ENCODE measurements at regions of chr19 and their contacts with region 1.

Region 1: GRCh38 chr19:34253699-34254551 is 429 bp upstream of the GARRE1 start:
- DNase-seq: peak in 18 of 35 experiments; percentile 5 to 91 (median 80)
- ATAC-seq: peak; percentile 16 to 48 (median 34)
- H3K4me3 ChIP-seq: peak overlapping the region; percentile 78 to 94
- H3K4me3 Mint-ChIP-seq: peak overlapping the region; percentile 86 to 99 (median 95)
- H3K27ac ChIP-seq: peak overlapping the region; percentile 90
- H3K27ac Mint-ChIP-seq: peak overlapping the region; percentile 95 to 98
- H3K4me1 ChIP-seq: peaks cover 14 to 20% of the 10 kb centered on the region in 2 experiments
- H3K4me1 Mint-ChIP-seq: peaks cover 32 to 41% (median 39%) of the 10 kb centered on the region in 3 donors
- H3K27me3 ChIP-seq: no peaks in the 10 kb centered on the region
- H3K27me3 Mint-ChIP-seq: no peaks in the 10 kb centered on the region

Region 2: GRCh38 chr19:33350538-33351309 is 903.2 kb before region 1 on chr19:
- CTCF ChIA-PET with region 1: no interaction called
- POLR2A ChIA-PET with region 1: no interaction called
- DNase-seq: no peak
- ATAC-seq: no peak
- H3K4me3 ChIP-seq: no peak overlapping the region
- H3K4me3 Mint-ChIP-seq: no peak overlapping the region
- H3K27ac ChIP-seq: no peak overlapping the region
- H3K27ac Mint-ChIP-seq: no peak overlapping the region
- H3K4me1 ChIP-seq: no peaks in the 10 kb centered on the region
- H3K4me1 Mint-ChIP-seq: no peaks in the 10 kb centered on the region
- H3K27me3 ChIP-seq: peaks cover 0 to 33% of the 10 kb centered on the region in 2 experiments
- H3K27me3 Mint-ChIP-seq: peaks cover 12 to 31% of the 10 kb centered on the region in 2 donors

Region 3: GRCh38 chr19:34109601-34110000 is 144.3 kb before region 1 on chr19:
- CTCF ChIA-PET with region 1: no interaction called
- POLR2A ChIA-PET with region 1: no interaction called
- DNase-seq: no peak
- ATAC-seq: no peak
- H3K4me3 ChIP-seq: no peak overlapping the region
- H3K4me3 Mint-ChIP-seq: no peak overlapping the region
- H3K27ac ChIP-seq: no peak overlapping the region
- H3K27ac Mint-ChIP-seq: no peak overlapping the region
- H3K4me1 ChIP-seq: no peaks in the 10 kb centered on the region
- H3K4me1 Mint-ChIP-seq: no peaks in the 10 kb centered on the region
- H3K27me3 ChIP-seq: peaks cover 2 to 24% of the 10 kb centered on the region in 2 experiments
- H3K27me3 Mint-ChIP-seq: peaks cover 6 to 17% of the 10 kb centered on the region in 2 donors

Region 4: DNA sequence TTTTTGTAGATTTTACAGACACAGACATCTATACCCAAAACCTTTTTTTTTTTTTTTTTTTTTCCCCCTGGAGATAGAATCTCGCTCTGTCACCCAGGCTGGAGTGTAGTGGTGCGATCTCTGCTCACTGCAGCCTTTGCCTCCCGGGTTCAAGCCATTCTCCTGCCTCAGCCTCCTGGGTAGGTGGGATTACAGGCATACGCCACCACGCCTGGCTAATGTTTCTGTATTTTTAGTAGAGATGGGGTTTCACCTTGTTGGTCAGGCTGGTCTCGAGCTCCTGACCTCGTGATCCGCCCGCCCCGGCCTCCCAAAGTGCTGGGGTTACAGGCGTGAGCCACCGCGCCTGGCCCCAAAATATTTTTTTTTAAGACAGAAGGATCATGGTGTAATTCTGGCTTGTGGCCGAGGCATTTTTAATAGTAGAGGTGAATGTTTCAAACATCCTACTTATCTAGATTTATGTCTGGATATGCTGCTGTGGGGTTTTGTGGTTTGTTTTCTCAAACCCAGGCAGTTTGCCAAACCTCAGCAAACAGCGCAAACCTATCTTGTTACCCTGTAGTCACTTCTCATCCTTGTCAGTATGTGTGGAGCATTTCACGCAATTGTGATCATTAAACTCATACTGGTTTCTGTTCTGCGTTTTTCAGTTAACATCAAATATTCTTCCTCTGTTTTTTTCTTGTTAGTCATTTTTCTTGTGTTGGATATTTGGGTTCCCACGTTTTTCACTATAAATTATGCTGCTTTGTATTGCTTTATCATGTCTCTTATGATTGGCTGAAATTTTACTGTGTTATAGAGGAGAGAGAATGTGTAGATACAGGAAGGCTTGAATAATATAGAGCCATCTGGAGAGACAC is 35.7 kb before region 1 on chr19:
- CTCF ChIA-PET with region 1: interaction called in 1 of 2 experiments, 10 read pairs
- POLR2A ChIA-PET with region 1: no interaction called
- DNase-seq: peak; percentile 30 to 91 (median 75)
- ATAC-seq: peak; percentile 90 to 96 (median 94)
- H3K4me3 ChIP-seq: peak overlapping the region in 1 of 2 donors; percentile 25
- H3K4me3 Mint-ChIP-seq: peak overlapping the region; percentile 42 to 65 (median 64)
- H3K27ac ChIP-seq: peak overlapping the region; percentile 36
- H3K27ac Mint-ChIP-seq: peak overlapping the region; percentile 74 to 87
- H3K4me1 ChIP-seq: peaks cover 20 to 22% of the 10 kb centered on the region in 2 experiments
- H3K4me1 Mint-ChIP-seq: peaks cover 49 to 56% (median 52%) of the 10 kb centered on the region in 3 donors
- H3K27me3 ChIP-seq: no peaks in the 10 kb centered on the region
- H3K27me3 Mint-ChIP-seq: no peaks in the 10 kb centered on the region

Region 5: GRCh38 chr19:34468409-34468808 is 214.5 kb after region 1 on chr19:
- CTCF ChIA-PET with region 1: no interaction called
- POLR2A ChIA-PET with region 1: interaction called in 1 of 2 experiments, 11 read pairs
- DNase-seq: no peak
- ATAC-seq: no peak
- H3K4me3 ChIP-seq: no peak overlapping the region
- H3K4me3 Mint-ChIP-seq: no peak overlapping the region
- H3K27ac ChIP-seq: no peak overlapping the region
- H3K27ac Mint-ChIP-seq: no peak overlapping the region
- H3K4me1 ChIP-seq: no peaks in the 10 kb centered on the region
- H3K4me1 Mint-ChIP-seq: peaks cover 0 to 5% (median 0%) of the 10 kb centered on the region in 3 donors
- H3K27me3 ChIP-seq: no peaks in the 10 kb centered on the region
- H3K27me3 Mint-ChIP-seq: no peaks in the 10 kb centered on the region

Measured in T-cell (primary cell).